ENCODE measurements at regions of chr10 and their contacts with region 1.

Region 1: GRCh38 chr10:95693668-95694534 is at the start of gene TCTN3:
- DNase-seq: peak; percentile 92 to 100 (median 95)
- ATAC-seq: peak; percentile 94
- H3K4me3 ChIP-seq: peak within 1 kb of the TSS; percentile 65 to 76
- H3K4me3 Mint-ChIP-seq: peak within 1 kb of the TSS; percentile 95
- H3K27ac ChIP-seq: peak within 1 kb of the TSS; percentile 87 to 89
- H3K27ac Mint-ChIP-seq: peak within 1 kb of the TSS; percentile 96
- H3K4me1 ChIP-seq: peaks cover 24% of the 10 kb centered on the region
- H3K4me1 Mint-ChIP-seq: peaks cover 41% of the 10 kb centered on the region
- H3K27me3 ChIP-seq: no peaks in the 10 kb centered on the region
- H3K27me3 Mint-ChIP-seq: peaks cover 3% of the 10 kb centered on the region
- CTCF ChIP-seq: peak; percentile 98
- total RNA-seq, gene TCTN3: 14.3 to 15.6 TPM

Region 2: DNA sequence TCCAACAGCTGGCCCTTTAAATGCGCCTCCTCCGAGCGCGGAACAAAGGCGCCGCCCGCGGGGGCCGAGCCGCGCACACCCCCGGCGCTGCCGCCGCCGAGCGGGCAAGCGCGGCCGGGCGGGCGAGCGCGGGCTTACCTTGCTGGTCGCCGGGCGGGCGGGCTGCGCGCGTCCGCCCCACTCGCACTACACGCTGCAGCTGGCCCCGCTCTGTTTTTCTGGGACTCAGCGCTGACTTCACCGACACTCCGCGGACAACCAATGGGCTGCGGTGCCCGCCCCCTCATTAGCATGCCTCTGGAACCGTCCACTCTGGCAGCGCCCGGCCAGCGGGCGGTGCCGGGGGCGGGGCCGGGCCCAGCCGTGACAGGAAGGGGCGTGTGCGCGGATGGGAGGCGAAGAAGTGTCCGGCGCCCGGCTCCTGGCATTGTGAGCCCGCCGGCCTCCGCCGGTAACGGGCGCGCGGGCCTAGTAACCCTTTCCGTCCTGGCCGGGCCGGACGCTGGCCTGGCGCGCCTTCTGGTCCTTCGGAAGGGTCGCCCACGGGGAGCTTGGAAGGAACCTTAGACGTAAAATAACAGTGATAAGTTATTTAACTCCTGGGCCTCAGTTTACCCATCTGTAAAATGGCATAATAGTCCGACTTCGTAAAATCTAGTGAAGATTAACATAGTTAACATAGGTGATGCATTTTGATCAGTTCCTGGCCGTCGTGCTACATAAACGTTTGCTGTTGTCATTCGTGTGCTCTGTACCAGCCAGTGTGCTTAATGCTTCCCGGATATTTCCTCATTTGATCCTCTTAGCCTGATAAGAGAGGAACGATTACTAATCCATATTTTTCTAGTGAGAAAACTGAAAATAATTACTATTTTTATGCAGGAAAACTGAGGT is 132.5 kb before region 1 on chr10 and contains the start of gene SORBS1:
- CTCF ChIA-PET with region 1: no interaction called
- POLR2A ChIA-PET with region 1: no interaction called
- intact Hi-C with region 1: loop called in 1 of 2 experiments (anchors 2 kb)
- DNase-seq: peak; percentile 73 to 95 (median 86)
- ATAC-seq: peak; percentile 97
- H3K4me3 ChIP-seq: peak within 1 kb of the TSS; percentile 71 to 99
- H3K4me3 Mint-ChIP-seq: peak within 1 kb of the TSS; percentile 99
- H3K27ac ChIP-seq: peak within 1 kb of the TSS in 1 of 2 experiments; percentile 59
- H3K27ac Mint-ChIP-seq: peak within 1 kb of the TSS; percentile 89
- H3K4me1 ChIP-seq: peaks cover 10% of the 10 kb centered on the region
- H3K4me1 Mint-ChIP-seq: peaks cover 10% of the 10 kb centered on the region
- H3K27me3 ChIP-seq: no peaks in the 10 kb centered on the region
- H3K27me3 Mint-ChIP-seq: peaks cover 10% of the 10 kb centered on the region
- CTCF ChIP-seq: no peak
- total RNA-seq, gene SORBS1: 3.0 to 3.9 TPM

Region 3: GRCh38 chr10:95739056-95739455 is 45.2 kb after region 1 on chr10:
- CTCF ChIA-PET with region 1: no interaction called
- POLR2A ChIA-PET with region 1: no interaction called
- intact Hi-C with region 1: no loop called
- DNase-seq: no peak
- ATAC-seq: no peak
- H3K4me3 ChIP-seq: no peak overlapping the region
- H3K4me3 Mint-ChIP-seq: no peak overlapping the region
- H3K27ac ChIP-seq: no peak overlapping the region
- H3K27ac Mint-ChIP-seq: no peak overlapping the region
- H3K4me1 ChIP-seq: no peaks in the 10 kb centered on the region
- H3K4me1 Mint-ChIP-seq: no peaks in the 10 kb centered on the region
- H3K27me3 ChIP-seq: no peaks in the 10 kb centered on the region
- H3K27me3 Mint-ChIP-seq: peaks cover 18% of the 10 kb centered on the region
- CTCF ChIP-seq: no peak

Region 4: DNA sequence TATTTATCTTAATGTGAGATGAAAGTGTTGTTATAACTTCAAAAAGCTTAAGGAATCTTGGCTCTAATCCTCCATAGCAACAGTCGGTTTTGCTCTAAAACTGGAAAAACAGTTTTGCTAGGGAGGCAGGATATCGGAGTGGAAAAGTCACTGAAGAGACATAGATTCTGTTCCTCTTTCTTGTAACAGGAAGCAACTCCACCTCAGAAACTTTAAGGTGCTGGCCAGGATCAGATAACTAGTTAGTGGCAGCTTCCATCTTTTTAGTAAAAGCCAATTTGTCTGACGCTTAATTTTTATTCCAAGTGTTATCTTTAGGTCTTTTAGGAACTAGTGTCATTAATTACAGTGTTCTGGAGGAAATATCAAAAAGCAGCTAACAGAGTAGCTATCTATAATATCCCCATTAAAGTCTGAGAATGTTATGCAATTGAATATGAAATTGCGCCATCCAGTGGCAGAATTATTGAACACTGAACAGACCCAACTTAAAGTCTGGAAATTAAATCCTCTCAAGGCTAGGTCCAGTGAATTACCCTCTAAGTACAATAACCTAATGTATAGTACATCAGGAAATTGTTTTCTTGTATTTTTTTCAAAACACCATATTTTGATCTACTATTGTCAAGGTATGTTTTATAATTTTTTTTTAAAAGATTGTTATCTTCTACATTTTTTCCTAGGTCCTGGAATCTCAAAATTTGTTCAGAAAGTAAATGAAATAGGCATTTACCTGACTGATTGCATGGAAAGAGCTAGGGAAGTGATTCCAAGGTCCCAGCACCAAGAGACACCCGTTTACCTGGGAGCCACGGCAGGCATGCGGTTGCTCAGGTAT is 148.0 kb after region 1 on chr10:
- CTCF ChIA-PET with region 1: interaction called, 80 read pairs
- POLR2A ChIA-PET with region 1: interaction called, 5 read pairs
- intact Hi-C with region 1: loop called (anchors 1 kb)
- DNase-seq: peak in 5 of 9 experiments; percentile 15 to 80 (median 45)
- ATAC-seq: peak; percentile 69
- H3K4me3 ChIP-seq: no peak overlapping the region
- H3K4me3 Mint-ChIP-seq: no peak overlapping the region
- H3K27ac ChIP-seq: peak overlapping the region in 1 of 2 experiments; percentile 13
- H3K27ac Mint-ChIP-seq: no peak overlapping the region
- H3K4me1 ChIP-seq: no peaks in the 10 kb centered on the region
- H3K4me1 Mint-ChIP-seq: peaks cover 4% of the 10 kb centered on the region
- H3K27me3 ChIP-seq: no peaks in the 10 kb centered on the region
- H3K27me3 Mint-ChIP-seq: peaks cover 7% of the 10 kb centered on the region
- CTCF ChIP-seq: peak; percentile 81

Region 5: DNA sequence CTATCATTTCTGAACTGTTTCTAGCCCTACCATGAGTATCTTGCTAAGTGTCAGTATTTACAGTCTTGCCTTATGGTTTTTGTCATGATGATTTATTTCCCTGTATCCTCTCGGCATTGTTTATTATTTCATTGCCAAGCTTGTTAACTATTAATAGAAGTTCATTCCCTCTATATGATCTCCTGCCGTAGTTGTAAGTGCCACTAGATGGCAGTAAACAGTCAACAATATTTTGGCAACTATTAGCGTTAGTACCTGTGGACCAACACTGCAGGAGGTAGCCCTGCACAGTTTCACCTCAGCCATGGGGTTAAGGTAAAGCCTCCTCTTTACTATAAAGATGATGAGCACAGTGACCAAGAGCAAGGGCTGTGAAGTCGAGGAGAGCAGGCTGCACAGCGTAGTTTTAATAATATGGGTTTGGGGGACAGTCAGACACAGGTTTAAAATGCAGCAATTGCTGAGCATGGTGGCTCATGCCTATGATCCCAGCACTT is 323.3 kb after region 1 on chr10:
- CTCF ChIA-PET with region 1: no interaction called
- POLR2A ChIA-PET with region 1: no interaction called
- intact Hi-C with region 1: loop called in 1 of 2 experiments (anchors 1 kb)
- DNase-seq: peak in 5 of 9 experiments; percentile 13 to 71 (median 36)
- ATAC-seq: peak; percentile 81
- H3K4me3 ChIP-seq: no peak overlapping the region
- H3K4me3 Mint-ChIP-seq: no peak overlapping the region
- H3K27ac ChIP-seq: no peak overlapping the region
- H3K27ac Mint-ChIP-seq: no peak overlapping the region
- H3K4me1 ChIP-seq: no peaks in the 10 kb centered on the region
- H3K4me1 Mint-ChIP-seq: no peaks in the 10 kb centered on the region
- H3K27me3 ChIP-seq: no peaks in the 10 kb centered on the region
- H3K27me3 Mint-ChIP-seq: peaks cover 5% of the 10 kb centered on the region
- CTCF ChIP-seq: peak; percentile 63

Region 6: DNA sequence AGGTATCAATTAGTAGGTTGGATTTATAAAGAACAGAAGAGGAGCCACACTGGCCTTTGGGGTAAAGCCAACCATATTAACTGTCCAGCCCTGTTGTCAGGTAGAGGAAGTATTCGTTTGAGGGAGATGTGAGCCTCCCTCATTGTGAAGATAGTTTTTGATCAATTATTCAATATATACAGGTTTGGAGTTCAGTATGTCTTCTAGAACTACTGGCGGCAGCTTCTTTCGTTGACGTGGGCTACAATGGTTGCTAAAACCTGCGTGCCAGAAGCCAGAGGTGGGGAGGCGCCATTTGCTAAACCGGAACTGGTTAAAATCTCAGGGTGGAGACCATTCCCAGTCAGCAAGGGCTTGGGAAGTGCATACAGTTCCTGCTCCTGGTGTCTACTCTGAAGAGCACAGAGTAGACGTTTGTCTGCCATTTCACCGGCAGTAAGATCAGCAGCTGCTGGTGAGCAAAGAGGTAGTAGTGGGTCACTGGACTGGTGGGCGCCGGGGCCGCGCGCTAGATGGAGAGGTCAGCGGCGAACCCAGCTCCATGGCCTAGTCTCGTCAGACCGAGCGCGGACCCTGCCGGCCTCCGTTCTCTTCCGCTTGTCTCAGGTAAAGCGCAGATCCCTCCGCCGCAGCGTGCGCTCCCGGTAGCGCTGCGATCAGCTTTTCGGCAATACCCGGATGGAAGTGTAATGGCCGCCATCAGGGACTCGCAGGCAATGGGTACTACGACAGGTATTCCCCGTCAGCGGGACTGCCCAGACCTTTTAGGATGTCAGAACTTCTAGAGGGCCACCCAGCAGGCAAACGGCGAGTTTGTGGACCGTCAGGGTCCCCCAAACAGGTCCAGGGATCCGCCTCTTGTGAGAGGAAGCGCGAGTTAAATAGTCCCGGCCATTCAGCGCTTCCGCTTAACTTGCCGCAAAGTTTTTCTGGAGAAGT is 435.8 kb after region 1 on chr10 and contains the start of gene ZNF518A:
- CTCF ChIA-PET with region 1: interaction called, 5 read pairs
- POLR2A ChIA-PET with region 1: interaction called, 14 read pairs
- intact Hi-C with region 1: loop called in 1 of 2 experiments (anchors 5 kb)
- DNase-seq: peak; percentile 80 to 97 (median 88)
- ATAC-seq: peak; percentile 82
- H3K4me3 ChIP-seq: peak within 1 kb of the TSS; percentile 92 to 93
- H3K4me3 Mint-ChIP-seq: peak within 1 kb of the TSS; percentile 96
- H3K27ac ChIP-seq: peak within 1 kb of the TSS; percentile 98 to 99
- H3K27ac Mint-ChIP-seq: peak within 1 kb of the TSS; percentile 99
- H3K4me1 ChIP-seq: peaks cover 19% of the 10 kb centered on the region
- H3K4me1 Mint-ChIP-seq: peaks cover 25% of the 10 kb centered on the region
- H3K27me3 ChIP-seq: peaks cover 2 to 7% of the 10 kb centered on the region in 2 experiments
- H3K27me3 Mint-ChIP-seq: peaks cover 37% of the 10 kb centered on the region
- CTCF ChIP-seq: no peak
- total RNA-seq, gene ZNF518A: 8.7 to 9.3 TPM

Region 7: GRCh38 chr10:96586419-96587263 is 892.7 kb after region 1 on chr10 and contains the start of gene TM9SF3:
- CTCF ChIA-PET with region 1: no interaction called
- POLR2A ChIA-PET with region 1: interaction called, 4 read pairs
- intact Hi-C with region 1: loop called (anchors 5 kb)
- DNase-seq: peak; percentile 86 to 97 (median 94)
- ATAC-seq: peak; percentile 83
- H3K4me3 ChIP-seq: peak within 1 kb of the TSS; percentile 94
- H3K4me3 Mint-ChIP-seq: no peak within 1 kb of the TSS
- H3K27ac ChIP-seq: peak within 1 kb of the TSS; percentile 98 to 99
- H3K27ac Mint-ChIP-seq: peak within 1 kb of the TSS; percentile 86
- H3K4me1 ChIP-seq: peaks cover 51% of the 10 kb centered on the region
- H3K4me1 Mint-ChIP-seq: peaks cover 50% of the 10 kb centered on the region
- H3K27me3 ChIP-seq: no peaks in the 10 kb centered on the region
- H3K27me3 Mint-ChIP-seq: no peaks in the 10 kb centered on the region
- CTCF ChIP-seq: no peak
- total RNA-seq, gene TM9SF3: 105 to 106 TPM